ENCODE measurements at regions of chr13 and their contacts with region 1.

Region 1: DNA sequence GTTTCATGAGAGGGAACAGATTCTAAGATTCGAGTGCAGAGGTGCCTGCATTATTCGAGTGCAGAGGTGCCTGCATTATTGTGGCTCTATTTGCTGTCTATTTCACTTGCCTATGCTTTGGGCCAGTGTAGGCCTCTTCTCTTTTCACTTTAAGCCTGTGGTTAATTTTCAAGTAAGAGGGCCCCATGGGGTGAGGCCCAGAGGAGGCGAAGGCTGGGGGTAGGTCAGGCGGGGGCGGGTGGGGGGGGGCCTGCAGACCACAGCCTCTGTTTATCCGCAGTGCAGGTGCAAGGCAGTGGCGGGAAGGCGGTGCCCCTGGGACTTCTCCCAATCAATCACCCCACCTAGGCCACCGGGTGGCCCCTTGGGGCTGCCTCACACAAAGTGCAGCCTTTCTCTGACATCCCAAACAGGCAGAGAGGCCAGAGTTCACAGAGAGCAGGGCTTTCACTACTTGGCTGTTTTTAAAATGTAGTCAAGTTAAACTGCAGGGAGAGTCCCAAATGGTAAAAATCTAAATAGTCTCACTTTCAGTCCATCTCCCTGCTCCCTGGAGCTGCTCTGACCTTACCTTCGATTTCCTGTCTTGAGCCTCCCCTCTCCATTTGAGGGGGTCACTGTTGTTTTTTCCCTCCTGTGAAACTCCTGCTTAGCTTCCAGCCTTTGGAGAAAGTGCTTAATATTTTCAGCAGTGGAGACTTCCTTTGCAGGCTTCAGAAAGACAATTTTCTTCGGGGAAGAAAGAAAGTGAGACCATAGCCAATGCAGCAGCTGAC is 249.0 kb downstream of the DLEU7 start:
- DNase-seq: peak; percentile 98
- H3K4me3 ChIP-seq: peak overlapping the region; percentile 50
- H3K27ac ChIP-seq: peak overlapping the region; percentile 98
- H3K4me1 ChIP-seq: peaks cover 84% of the 10 kb centered on the region
- CTCF ChIP-seq: no peak

Region 2: GRCh38 chr13:49996951-49997895 is 597.2 kb before region 1 on chr13 and contains the start of gene TRIM13:
- CTCF ChIA-PET with region 1: no interaction called
- POLR2A ChIA-PET with region 1: no interaction called
- intact Hi-C with region 1: loop called (anchors 10 kb)
- DNase-seq: peak; percentile 92
- H3K4me3 ChIP-seq: peak within 1 kb of the TSS; percentile 94
- H3K27ac ChIP-seq: peak within 1 kb of the TSS; percentile 87
- H3K4me1 ChIP-seq: peaks cover 39% of the 10 kb centered on the region
- CTCF ChIP-seq: peak; percentile 97
- total RNA-seq, gene TRIM13: 9.5 and 12.5 TPM in 2 replicates

Region 3: GRCh38 chr13:50130123-50130946 is 464.1 kb before region 1 on chr13:
- CTCF ChIA-PET with region 1: no interaction called
- POLR2A ChIA-PET with region 1: interaction called, 4 read pairs
- intact Hi-C with region 1: loop called (anchors 5 kb)
- DNase-seq: peak; percentile 65
- H3K4me3 ChIP-seq: peak overlapping the region; percentile 70
- H3K27ac ChIP-seq: peak overlapping the region; percentile 71
- H3K4me1 ChIP-seq: peaks cover 60% of the 10 kb centered on the region
- CTCF ChIP-seq: no peak

Region 4: DNA sequence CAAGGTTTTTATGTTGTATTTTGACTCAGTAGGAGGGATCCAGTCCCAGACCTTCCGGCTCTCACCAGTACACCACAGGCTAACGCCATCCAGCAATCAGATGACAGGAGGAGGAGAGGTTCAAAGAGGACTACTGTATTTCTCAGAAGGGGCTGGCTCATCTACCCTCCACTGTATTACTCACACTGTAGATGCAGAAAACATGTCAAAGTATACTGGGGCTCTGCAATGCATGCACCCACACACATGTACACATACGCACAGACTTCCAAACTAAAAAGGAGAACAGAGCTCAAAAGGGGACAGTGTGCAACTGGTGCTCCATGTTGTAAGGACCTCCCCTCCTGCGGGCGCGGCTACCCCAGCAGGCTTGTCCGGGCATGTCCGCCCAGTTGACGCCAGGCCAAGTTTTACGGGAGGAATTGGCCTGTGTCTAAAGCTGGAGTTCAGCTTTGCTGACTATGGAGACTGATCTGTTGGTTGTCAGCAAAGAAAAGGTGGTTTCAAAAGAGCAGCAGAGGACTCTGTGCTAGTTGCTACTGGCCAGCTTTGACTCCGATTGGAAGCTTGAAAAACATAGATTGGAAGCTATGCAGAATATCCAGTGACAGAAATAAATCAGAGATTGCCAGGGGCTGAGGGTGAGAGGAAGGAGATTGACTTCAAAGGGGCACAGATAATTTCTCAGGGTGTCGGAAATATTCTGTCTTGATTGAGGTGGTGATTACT is 65.1 kb before region 1 on chr13:
- CTCF ChIA-PET with region 1: no interaction called
- POLR2A ChIA-PET with region 1: interaction called, 7 read pairs
- intact Hi-C with region 1: loop called (anchors 1 kb)
- DNase-seq: no peak
- H3K4me3 ChIP-seq: no peak overlapping the region
- H3K27ac ChIP-seq: no peak overlapping the region
- H3K4me1 ChIP-seq: peaks cover 54% of the 10 kb centered on the region
- CTCF ChIP-seq: no peak

Region 5: DNA sequence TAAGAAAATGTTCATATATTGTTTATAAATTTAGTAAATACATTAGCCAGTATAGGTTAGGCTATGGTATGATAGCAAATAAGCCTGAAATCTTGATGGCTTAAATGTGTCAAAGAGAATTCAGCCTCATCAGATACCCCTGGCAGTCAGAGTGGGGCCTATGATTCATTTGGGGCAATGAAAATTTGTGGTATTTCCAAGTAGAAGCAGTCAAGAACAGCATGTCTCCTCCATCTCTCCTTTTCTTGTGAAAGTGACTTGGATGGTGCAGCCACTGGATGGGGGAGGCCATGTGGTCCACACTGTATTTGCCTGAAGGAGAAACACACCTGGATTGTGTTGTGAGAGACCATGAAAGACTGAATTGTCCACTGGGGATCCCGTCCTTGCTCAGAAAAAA is 166.3 kb after region 1 on chr13:
- CTCF ChIA-PET with region 1: no interaction called
- POLR2A ChIA-PET with region 1: interaction called, 7 read pairs
- intact Hi-C with region 1: loop called (anchors 2 kb)
- DNase-seq: no peak
- H3K4me3 ChIP-seq: no peak overlapping the region
- H3K27ac ChIP-seq: no peak overlapping the region
- H3K4me1 ChIP-seq: peaks cover 45% of the 10 kb centered on the region
- CTCF ChIP-seq: no peak

Region 6: GRCh38 chr13:51825165-51825592 is 1230.7 kb after region 1 on chr13:
- CTCF ChIA-PET with region 1: no interaction called
- POLR2A ChIA-PET with region 1: no interaction called
- intact Hi-C with region 1: loop called (anchors 10 kb)
- DNase-seq: peak; percentile 72
- H3K4me3 ChIP-seq: peak overlapping the region; percentile 25
- H3K27ac ChIP-seq: peak overlapping the region; percentile 95
- H3K4me1 ChIP-seq: peaks cover 100% of the 10 kb centered on the region
- CTCF ChIP-seq: no peak